Ovary (tissue), 10 donors: ENCODE measurements at regions of chr3 and their contacts with region 1.

Region 1: DNA sequence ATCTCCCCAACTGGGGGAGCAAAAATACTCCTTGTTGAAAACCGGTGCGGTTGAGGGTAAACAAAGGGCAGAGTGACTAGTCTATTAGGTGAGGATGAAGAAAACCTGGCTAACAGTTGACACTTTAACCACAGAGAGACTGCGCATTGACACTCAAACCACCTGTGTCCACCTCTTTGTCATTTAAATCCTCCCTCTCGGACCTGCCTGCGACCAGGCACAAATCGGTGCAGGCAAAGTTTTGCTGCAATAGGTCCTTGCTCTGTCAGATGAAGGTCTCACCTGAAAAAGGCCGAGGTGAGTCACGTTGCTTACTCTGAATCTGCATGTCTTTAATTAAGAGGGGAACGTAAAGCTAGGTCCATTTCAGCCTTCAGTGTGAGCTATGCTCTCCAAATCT is 494.1 kb upstream of the DPPA4 start:
- DNase-seq: no peak
- H3K4me3 ChIP-seq: no peak overlapping the region
- H3K27ac ChIP-seq: no peak overlapping the region
- H3K4me1 ChIP-seq: no peaks in the 10 kb centered on the region
- H3K27me3 ChIP-seq: no peaks in the 10 kb centered on the region
- CTCF ChIP-seq: no peak
- EP300 ChIP-seq: no peak
- POLR2A ChIP-seq: no peak

Region 2: GRCh38 chr3:111035893-111036292 is 1204.5 kb after region 1 on chr3:
- intact Hi-C with region 1: loop called in 1 of 4 experiments (anchors 10 kb)
- DNase-seq: no peak
- H3K4me3 ChIP-seq: no peak overlapping the region
- H3K27ac ChIP-seq: no peak overlapping the region
- H3K4me1 ChIP-seq: no peaks in the 10 kb centered on the region
- H3K27me3 ChIP-seq: no peaks in the 10 kb centered on the region
- CTCF ChIP-seq: no peak
- EP300 ChIP-seq: no peak
- POLR2A ChIP-seq: no peak